ENCODE measurements at regions of chr5 and their contacts with region 1.

Region 1: GRCh38 chr5:18380729-18381362 is 746.6 kb downstream of the TAF11L14 start:
- DNase-seq: no peak
- ATAC-seq: no peak
- H3K4me3 ChIP-seq: no peak overlapping the region
- H3K4me3 Mint-ChIP-seq: no peak overlapping the region
- H3K27ac ChIP-seq: no peak overlapping the region
- H3K27ac Mint-ChIP-seq: no peak overlapping the region
- H3K4me1 ChIP-seq: no peaks in the 10 kb centered on the region
- H3K4me1 Mint-ChIP-seq: no peaks in the 10 kb centered on the region
- H3K27me3 ChIP-seq: no peaks in the 10 kb centered on the region
- H3K27me3 Mint-ChIP-seq: no peaks in the 10 kb centered on the region

Region 2: GRCh38 chr5:17907094-17907493 is 473.8 kb before region 1 on chr5:
- CTCF ChIA-PET with region 1: no interaction called
- POLR2A ChIA-PET with region 1: no interaction called
- intact Hi-C with region 1: loop called in 1 of 2 experiments (anchors 5 kb)
- DNase-seq: no peak
- ATAC-seq: no peak
- H3K4me3 ChIP-seq: no peak overlapping the region
- H3K4me3 Mint-ChIP-seq: no peak overlapping the region
- H3K27ac ChIP-seq: no peak overlapping the region
- H3K27ac Mint-ChIP-seq: no peak overlapping the region
- H3K4me1 ChIP-seq: no peaks in the 10 kb centered on the region
- H3K4me1 Mint-ChIP-seq: no peaks in the 10 kb centered on the region
- H3K27me3 ChIP-seq: no peaks in the 10 kb centered on the region
- H3K27me3 Mint-ChIP-seq: no peaks in the 10 kb centered on the region

Region 3: DNA sequence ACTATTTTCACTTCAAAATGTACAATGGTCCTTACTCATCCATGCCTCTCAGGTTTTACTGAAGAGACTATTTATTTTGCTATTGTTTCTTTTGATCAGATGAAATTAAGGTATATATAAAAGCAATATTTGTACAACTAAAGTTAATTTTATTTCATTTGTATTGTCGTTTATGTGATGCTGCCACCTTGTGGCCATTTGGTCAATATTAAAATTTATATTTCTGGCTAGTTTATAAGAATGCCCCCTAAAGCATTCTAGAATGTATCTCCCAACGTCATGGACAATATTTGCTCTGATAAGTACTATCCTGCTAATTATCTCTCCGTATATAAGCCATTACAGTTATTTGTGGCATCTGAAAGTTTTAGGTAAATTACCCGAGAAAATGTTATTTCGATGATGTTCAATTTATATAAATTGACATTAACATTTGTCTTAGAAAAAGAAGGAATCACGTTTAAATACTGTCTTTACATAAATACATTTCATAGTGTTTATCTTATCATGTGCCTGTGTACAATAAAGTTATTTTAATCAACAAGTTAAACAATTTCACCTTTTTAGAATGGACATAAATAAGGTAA is 66.6 kb before region 1 on chr5:
- CTCF ChIA-PET with region 1: no interaction called
- POLR2A ChIA-PET with region 1: no interaction called
- intact Hi-C with region 1: no loop called
- DNase-seq: peak in 1 of 9 donors; percentile 1
- ATAC-seq: no peak
- H3K4me3 ChIP-seq: no peak overlapping the region
- H3K4me3 Mint-ChIP-seq: no peak overlapping the region
- H3K27ac ChIP-seq: no peak overlapping the region
- H3K27ac Mint-ChIP-seq: no peak overlapping the region
- H3K4me1 ChIP-seq: no peaks in the 10 kb centered on the region
- H3K4me1 Mint-ChIP-seq: peaks cover 0 to 3% (median 0%) of the 10 kb centered on the region in 7 donors
- H3K27me3 ChIP-seq: no peaks in the 10 kb centered on the region
- H3K27me3 Mint-ChIP-seq: no peaks in the 10 kb centered on the region